Calu3 (cell line): ENCODE measurements at regions of chr5 and their contacts with region 1.

Region 1: DNA sequence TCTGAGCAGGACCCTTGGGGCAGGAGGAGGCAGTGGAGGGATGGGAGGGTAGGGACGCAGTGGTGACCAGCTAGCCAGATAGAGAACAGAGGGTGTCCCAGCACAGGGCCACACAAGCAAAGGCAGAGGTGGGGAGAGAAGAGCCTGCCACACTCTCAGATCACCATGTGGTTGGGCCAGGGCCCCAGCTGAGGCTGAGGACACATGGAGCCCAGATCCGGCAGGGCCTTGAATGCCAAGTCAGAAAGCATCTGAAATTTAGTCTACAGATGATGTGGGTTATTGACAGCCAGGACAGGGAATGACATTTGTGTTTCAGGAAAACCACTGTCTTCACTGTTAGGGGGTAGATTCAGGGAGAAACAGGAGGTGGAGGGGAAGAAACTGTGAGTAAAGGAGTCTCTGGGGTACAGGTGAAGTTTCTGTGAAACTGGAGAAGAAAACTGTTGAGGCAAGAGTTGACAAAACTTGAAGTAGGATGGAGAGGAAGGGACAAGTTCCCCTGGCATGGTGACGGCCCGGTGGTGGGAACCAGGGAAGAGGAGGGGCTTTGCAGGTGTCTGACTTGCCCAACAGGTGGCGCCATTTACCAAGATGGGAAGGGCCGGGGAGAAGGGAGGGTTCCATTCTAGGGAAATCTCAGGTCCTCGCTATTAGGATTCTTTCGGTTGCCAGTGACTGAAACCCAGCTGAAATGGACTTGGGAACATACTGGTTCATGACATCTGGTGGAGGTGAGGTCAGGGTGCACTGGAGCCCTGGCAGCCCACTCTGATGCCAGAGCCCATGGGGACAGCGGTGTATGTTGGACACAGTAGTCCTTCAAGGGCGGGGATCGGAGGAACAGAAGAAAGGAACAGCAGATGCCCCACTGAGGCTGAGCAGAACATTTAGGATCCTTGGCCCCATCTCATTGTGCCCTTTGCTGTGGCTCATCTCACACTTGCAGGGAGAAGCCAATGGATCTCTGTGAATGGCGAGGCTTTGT is 100.1 kb downstream of the KCNIP1 start:
- DNase-seq: peak; percentile 74
- H3K4me3 Mint-ChIP-seq: no peak overlapping the region
- H3K27ac Mint-ChIP-seq: no peak overlapping the region
- H3K4me1 Mint-ChIP-seq: no peaks in the 10 kb centered on the region
- H3K27me3 Mint-ChIP-seq: peaks cover 97% of the 10 kb centered on the region
- CTCF ChIP-seq: peak; percentile 81

Region 2: GRCh38 chr5:170252720-170253350 is 351.0 kb before region 1 on chr5:
- CTCF ChIA-PET with region 1: interaction called, 15 read pairs
- intact Hi-C with region 1: no loop called
- DNase-seq: no peak
- H3K4me3 Mint-ChIP-seq: no peak overlapping the region
- H3K27ac Mint-ChIP-seq: no peak overlapping the region
- H3K4me1 Mint-ChIP-seq: peaks cover 58% of the 10 kb centered on the region
- H3K27me3 Mint-ChIP-seq: no peaks in the 10 kb centered on the region
- CTCF ChIP-seq: no peak